Ovary (tissue), 10 donors: ENCODE measurements at regions of chr4 and their contacts with region 1.

Region 1: GRCh38 chr4:57865264-57865663 is 755.1 kb upstream of the IGFBP7 start:
- DNase-seq: no peak
- H3K4me3 ChIP-seq: no peak overlapping the region
- H3K27ac ChIP-seq: no peak overlapping the region
- H3K4me1 ChIP-seq: no peaks in the 10 kb centered on the region
- H3K27me3 ChIP-seq: no peaks in the 10 kb centered on the region
- CTCF ChIP-seq: no peak
- EP300 ChIP-seq: no peak
- POLR2A ChIP-seq: no peak

Region 2: GRCh38 chr4:56183344-56183959 is 1681.8 kb before region 1 on chr4:
- intact Hi-C with region 1: loop called in 1 of 4 experiments (anchors 10 kb)
- DNase-seq: no peak
- H3K4me3 ChIP-seq: no peak overlapping the region
- H3K27ac ChIP-seq: no peak overlapping the region
- H3K4me1 ChIP-seq: no peaks in the 10 kb centered on the region
- H3K27me3 ChIP-seq: no peaks in the 10 kb centered on the region
- CTCF ChIP-seq: no peak
- EP300 ChIP-seq: no peak
- POLR2A ChIP-seq: no peak

Region 3: DNA sequence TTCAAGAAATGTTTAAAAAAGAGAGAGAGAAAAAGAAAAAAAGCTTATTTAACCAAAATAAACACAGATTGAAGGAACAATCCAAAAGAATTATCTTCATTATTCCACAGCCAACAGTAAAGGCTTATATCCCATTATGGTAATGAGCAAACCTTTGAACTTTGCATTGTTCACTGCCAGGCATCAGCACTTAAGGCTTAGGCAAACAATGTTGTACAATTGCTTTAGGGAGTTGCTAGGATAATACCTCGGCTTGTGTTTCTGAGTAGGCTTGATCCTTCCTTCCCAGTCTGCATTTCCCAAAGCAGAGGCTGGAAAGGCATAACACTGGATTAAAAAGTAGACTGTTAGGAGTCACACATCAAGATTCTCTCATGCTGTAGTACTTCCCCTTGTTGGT is 402.4 kb before region 1 on chr4:
- intact Hi-C with region 1: no loop called
- DNase-seq: no peak
- H3K4me3 ChIP-seq: no peak overlapping the region
- H3K27ac ChIP-seq: no peak overlapping the region
- H3K4me1 ChIP-seq: no peaks in the 10 kb centered on the region
- H3K27me3 ChIP-seq: no peaks in the 10 kb centered on the region
- CTCF ChIP-seq: no peak
- EP300 ChIP-seq: no peak
- POLR2A ChIP-seq: no peak

Region 4: GRCh38 chr4:58453956-58454355 is 588.7 kb after region 1 on chr4:
- intact Hi-C with region 1: no loop called
- DNase-seq: no peak
- H3K4me3 ChIP-seq: no peak overlapping the region
- H3K27ac ChIP-seq: no peak overlapping the region
- H3K4me1 ChIP-seq: no peaks in the 10 kb centered on the region
- H3K27me3 ChIP-seq: no peaks in the 10 kb centered on the region
- CTCF ChIP-seq: no peak
- EP300 ChIP-seq: no peak
- POLR2A ChIP-seq: no peak